ENCODE measurements at regions of chr3 and their contacts with region 1.

Region 1: GRCh38 chr3:52238761-52239701 is at the start of gene TWF2:
- DNase-seq: no peak
- H3K4me3 ChIP-seq: peak within 1 kb of the TSS; percentile 96 to 98
- H3K27ac ChIP-seq: peak within 1 kb of the TSS; percentile 98
- H3K4me1 ChIP-seq: peaks cover 66% of the 10 kb centered on the region
- H3K27me3 ChIP-seq: no peaks in the 10 kb centered on the region
- CTCF ChIP-seq: peak in 2 of 3 experiments; percentile 7 to 13
- POLR2A ChIP-seq: peak in 1 of 2 donors; percentile 85
- total RNA-seq, gene TWF2: 93.8 TPM

Region 2: DNA sequence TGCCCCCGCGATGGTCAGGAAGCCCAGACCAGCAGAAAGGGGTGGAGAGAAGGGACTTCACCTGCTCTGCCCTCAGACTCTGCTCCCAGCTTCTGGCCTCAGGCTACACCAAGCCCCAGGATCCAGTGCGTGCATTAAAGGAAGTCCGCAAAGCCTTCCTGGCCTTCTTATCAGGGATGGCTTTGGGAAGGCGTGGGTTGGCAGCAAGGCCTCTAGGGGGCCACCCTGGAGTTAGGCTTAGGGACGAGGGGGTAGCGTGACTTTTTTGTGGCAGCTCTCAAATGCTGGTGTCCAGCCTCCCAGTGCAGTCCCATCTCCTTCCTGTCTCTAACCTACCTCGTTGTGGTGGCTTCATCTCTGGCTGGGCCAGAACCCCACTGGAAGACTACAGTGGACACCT is 224.4 kb before region 1 on chr3:
- intact Hi-C with region 1: no loop called
- DNase-seq: no peak
- H3K4me3 ChIP-seq: no peak overlapping the region
- H3K27ac ChIP-seq: no peak overlapping the region
- H3K4me1 ChIP-seq: peaks cover 3% of the 10 kb centered on the region
- H3K27me3 ChIP-seq: no peaks in the 10 kb centered on the region
- CTCF ChIP-seq: no peak
- POLR2A ChIP-seq: no peak

Region 3: GRCh38 chr3:52286777-52287110 is 47.7 kb after region 1 on chr3:
- intact Hi-C with region 1: loop called (anchors 5 kb)
- DNase-seq: peak in 1 of 2 donors; percentile 81
- H3K4me3 ChIP-seq: peak overlapping the region; percentile 77 to 89
- H3K27ac ChIP-seq: peak overlapping the region; percentile 98
- H3K4me1 ChIP-seq: peaks cover 23% of the 10 kb centered on the region
- H3K27me3 ChIP-seq: no peaks in the 10 kb centered on the region
- CTCF ChIP-seq: no peak
- POLR2A ChIP-seq: no peak